ENCODE measurements at regions of chr5 and their contacts with region 1.

Region 1: GRCh38 chr5:150560401-150561193 is 52.7 kb downstream of the NDST1 start:
- DNase-seq: peak; percentile 95
- H3K4me3 Mint-ChIP-seq: no peak overlapping the region
- H3K27ac Mint-ChIP-seq: peak overlapping the region; percentile 86
- H3K4me1 Mint-ChIP-seq: peaks cover 8% of the 10 kb centered on the region
- H3K27me3 Mint-ChIP-seq: no peaks in the 10 kb centered on the region
- CTCF ChIP-seq: peak; percentile 79

Region 2: DNA sequence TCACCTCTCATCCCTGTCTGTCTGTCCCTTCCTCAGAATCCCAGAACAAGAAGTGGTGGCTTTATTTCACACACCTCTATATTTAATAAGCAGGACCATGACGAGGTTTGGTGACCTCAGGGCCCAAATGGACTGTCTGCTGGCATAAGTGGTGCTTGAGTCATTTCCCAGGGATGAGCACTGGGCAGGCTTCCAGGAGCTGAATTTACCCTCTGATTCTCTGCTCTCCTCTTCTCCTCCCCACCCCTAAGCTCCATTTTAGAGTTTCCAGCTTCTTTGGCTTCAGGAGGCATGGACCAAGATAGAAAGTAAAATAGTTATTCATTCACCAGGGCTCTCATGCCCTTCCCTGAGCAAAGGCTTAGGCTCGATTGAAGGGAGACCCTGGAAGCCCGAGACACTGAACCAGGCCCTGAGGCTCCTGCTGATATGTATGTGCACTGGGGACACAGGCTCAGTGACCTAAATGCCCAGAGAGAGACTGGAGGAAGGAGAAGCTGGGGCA is 761.4 kb before region 1 on chr5:
- CTCF ChIA-PET with region 1: interaction called, 12 read pairs
- intact Hi-C with region 1: no loop called
- DNase-seq: no peak
- H3K4me3 Mint-ChIP-seq: no peak overlapping the region
- H3K27ac Mint-ChIP-seq: no peak overlapping the region
- H3K4me1 Mint-ChIP-seq: peaks cover 22% of the 10 kb centered on the region
- H3K27me3 Mint-ChIP-seq: no peaks in the 10 kb centered on the region
- CTCF ChIP-seq: no peak

Region 3: GRCh38 chr5:150640311-150641005 is 79.9 kb after region 1 on chr5 and contains the start of gene SYNPO:
- CTCF ChIA-PET with region 1: interaction called, 3 read pairs
- intact Hi-C with region 1: loop called (anchors 5 kb)
- DNase-seq: peak; percentile 49
- H3K4me3 Mint-ChIP-seq: peak within 1 kb of the TSS; percentile 19
- H3K27ac Mint-ChIP-seq: peak within 1 kb of the TSS; percentile 58
- H3K4me1 Mint-ChIP-seq: peaks cover 74% of the 10 kb centered on the region
- H3K27me3 Mint-ChIP-seq: no peaks in the 10 kb centered on the region
- CTCF ChIP-seq: no peak
- total RNA-seq, gene SYNPO: 0.92 and 2.5 TPM in 2 replicates

Region 4: GRCh38 chr5:150700594-150701293 is 140.1 kb after region 1 on chr5 and contains the start of gene RBM22:
- CTCF ChIA-PET with region 1: interaction called, 12 read pairs
- intact Hi-C with region 1: no loop called
- DNase-seq: peak; percentile 94
- H3K4me3 Mint-ChIP-seq: no peak within 1 kb of the TSS
- H3K27ac Mint-ChIP-seq: no peak within 1 kb of the TSS
- H3K4me1 Mint-ChIP-seq: no peaks in the 10 kb centered on the region
- H3K27me3 Mint-ChIP-seq: no peaks in the 10 kb centered on the region
- CTCF ChIP-seq: peak; percentile 65
- total RNA-seq, gene RBM22: 53.4 and 60.8 TPM in 2 replicates

Region 5: GRCh38 chr5:150778517-150779396 is 218.2 kb after region 1 on chr5 and contains the start of gene SMIM3:
- CTCF ChIA-PET with region 1: interaction called, 6 read pairs
- intact Hi-C with region 1: loop called (anchors 1 kb)
- DNase-seq: peak; percentile 83
- H3K4me3 Mint-ChIP-seq: peak within 1 kb of the TSS; percentile 98
- H3K27ac Mint-ChIP-seq: peak within 1 kb of the TSS; percentile 69
- H3K4me1 Mint-ChIP-seq: peaks cover 33% of the 10 kb centered on the region
- H3K27me3 Mint-ChIP-seq: no peaks in the 10 kb centered on the region
- CTCF ChIP-seq: no peak
- total RNA-seq, gene SMIM3: 6.9 and 8.4 TPM in 2 replicates

Region 6: GRCh38 chr5:150879358-150879757 is 318.8 kb after region 1 on chr5:
- CTCF ChIA-PET with region 1: no interaction called
- intact Hi-C with region 1: no loop called
- DNase-seq: no peak
- H3K4me3 Mint-ChIP-seq: no peak overlapping the region
- H3K27ac Mint-ChIP-seq: no peak overlapping the region
- H3K4me1 Mint-ChIP-seq: no peaks in the 10 kb centered on the region
- H3K27me3 Mint-ChIP-seq: no peaks in the 10 kb centered on the region
- CTCF ChIP-seq: no peak